Activated B cell treated with CpG ODN at 0.5 μM for 24 hours (primary cell): ENCODE measurements at regions of chr10 and their contacts with region 1.

Region 1: DNA sequence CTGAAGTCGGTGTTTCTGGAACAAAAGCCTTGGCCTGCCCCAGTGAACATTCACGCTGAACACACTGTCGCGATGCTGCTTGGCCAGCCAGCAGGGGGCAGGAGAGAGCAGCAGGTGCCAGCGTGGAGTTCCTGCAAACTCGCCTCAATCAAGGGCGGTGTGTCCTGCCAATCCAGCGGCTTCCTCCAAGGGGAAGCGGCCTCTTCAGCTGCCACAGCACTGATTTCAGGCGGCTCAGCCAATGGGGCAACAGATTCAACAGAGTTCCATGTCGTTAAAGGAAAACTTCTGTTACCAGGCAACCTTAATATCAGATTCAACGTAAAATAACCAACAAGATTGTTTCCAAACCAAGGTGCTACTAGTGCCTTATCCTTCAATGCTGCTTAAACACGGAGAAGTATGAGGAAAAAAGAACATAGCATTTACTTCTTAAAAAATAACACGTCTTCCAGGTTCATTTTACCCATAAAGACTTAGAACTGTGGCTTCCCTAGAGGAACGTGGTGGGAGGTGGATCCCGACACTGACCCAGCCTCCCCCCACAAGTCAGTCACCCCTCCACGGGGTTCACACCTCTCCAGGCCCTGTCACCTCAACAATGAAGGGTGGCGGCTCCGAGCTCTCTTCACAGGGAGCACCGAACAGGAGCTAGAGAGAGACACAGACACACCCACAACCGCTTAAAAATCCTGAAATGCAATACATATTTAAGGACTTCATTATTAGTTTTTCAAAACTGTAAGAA is 178.2 kb downstream of the DIP2C start:
- DNase-seq: peak; percentile 71
- ATAC-seq: peak; percentile 75
- H3K4me3 Mint-ChIP-seq: no peak overlapping the region
- H3K27ac Mint-ChIP-seq: no peak overlapping the region
- H3K4me1 Mint-ChIP-seq: peaks cover 13% of the 10 kb centered on the region
- H3K27me3 Mint-ChIP-seq: peaks cover 20% of the 10 kb centered on the region
- CTCF ChIP-seq: peak; percentile 93

Region 2: GRCh38 chr10:788796-789748 is 277.8 kb after region 1 on chr10:
- CTCF ChIA-PET with region 1: no interaction called
- POLR2A ChIA-PET with region 1: no interaction called
- intact Hi-C with region 1: loop called (anchors 1 kb)
- DNase-seq: peak; percentile 22
- ATAC-seq: peak; percentile 71
- H3K4me3 Mint-ChIP-seq: peak overlapping the region; percentile 74
- H3K27ac Mint-ChIP-seq: no peak overlapping the region
- H3K4me1 Mint-ChIP-seq: peaks cover 10% of the 10 kb centered on the region
- H3K27me3 Mint-ChIP-seq: peaks cover 20% of the 10 kb centered on the region
- CTCF ChIP-seq: no peak

Region 3: GRCh38 chr10:810351-810846 is 299.1 kb after region 1 on chr10:
- CTCF ChIA-PET with region 1: no interaction called
- POLR2A ChIA-PET with region 1: no interaction called
- intact Hi-C with region 1: loop called (anchors 10 kb)
- DNase-seq: no peak
- ATAC-seq: no peak
- H3K4me3 Mint-ChIP-seq: no peak overlapping the region
- H3K27ac Mint-ChIP-seq: no peak overlapping the region
- H3K4me1 Mint-ChIP-seq: no peaks in the 10 kb centered on the region
- H3K27me3 Mint-ChIP-seq: no peaks in the 10 kb centered on the region
- CTCF ChIP-seq: no peak